RWPE1 (cell line): ENCODE measurements at regions of chr12 and their contacts with region 1.

Region 1: DNA sequence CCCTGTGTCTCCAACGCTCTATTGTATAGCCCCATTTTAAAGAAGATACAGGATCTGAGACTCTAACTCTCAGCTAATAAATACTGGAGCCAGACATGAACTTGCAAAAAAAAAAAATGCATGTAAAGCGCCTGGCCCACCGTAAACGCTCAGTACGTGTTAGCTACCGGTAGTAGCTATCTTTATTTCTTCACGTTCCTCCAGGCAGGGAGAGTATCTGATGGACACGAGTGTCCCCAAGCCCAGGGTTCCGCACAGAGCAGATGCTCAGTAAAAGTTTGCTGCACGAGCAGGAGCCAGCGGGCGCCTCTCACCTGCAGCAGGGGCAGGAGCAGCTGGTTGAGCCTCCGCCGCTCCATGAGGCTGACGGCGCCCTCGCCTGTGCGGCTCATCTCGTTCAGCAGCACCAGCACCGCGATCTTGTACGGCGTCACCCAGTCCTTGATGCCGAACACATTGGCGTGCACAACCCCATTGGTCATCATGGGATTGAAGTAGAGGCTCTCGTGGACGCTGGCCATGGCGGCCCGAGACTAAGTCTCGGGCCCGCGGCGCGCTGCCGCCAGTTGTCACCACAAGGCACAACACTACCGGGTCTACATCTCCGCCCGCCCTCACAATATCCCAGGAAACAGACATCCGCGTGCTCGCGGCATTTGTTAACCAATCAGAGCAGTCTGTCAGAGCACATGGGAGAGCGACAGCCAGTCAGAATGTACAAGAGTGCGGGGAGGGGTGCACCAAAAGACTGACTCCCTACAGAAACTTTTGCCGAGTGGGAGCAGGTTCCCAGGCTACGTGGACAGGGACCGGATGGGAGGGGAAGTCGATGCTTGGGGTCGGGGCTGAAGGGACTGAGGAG is at the start of gene ANAPC5:
- DNase-seq: peak; percentile 99
- H3K27ac ChIP-seq: peak within 1 kb of the TSS; percentile 86
- CTCF ChIP-seq: no peak

Region 2: DNA sequence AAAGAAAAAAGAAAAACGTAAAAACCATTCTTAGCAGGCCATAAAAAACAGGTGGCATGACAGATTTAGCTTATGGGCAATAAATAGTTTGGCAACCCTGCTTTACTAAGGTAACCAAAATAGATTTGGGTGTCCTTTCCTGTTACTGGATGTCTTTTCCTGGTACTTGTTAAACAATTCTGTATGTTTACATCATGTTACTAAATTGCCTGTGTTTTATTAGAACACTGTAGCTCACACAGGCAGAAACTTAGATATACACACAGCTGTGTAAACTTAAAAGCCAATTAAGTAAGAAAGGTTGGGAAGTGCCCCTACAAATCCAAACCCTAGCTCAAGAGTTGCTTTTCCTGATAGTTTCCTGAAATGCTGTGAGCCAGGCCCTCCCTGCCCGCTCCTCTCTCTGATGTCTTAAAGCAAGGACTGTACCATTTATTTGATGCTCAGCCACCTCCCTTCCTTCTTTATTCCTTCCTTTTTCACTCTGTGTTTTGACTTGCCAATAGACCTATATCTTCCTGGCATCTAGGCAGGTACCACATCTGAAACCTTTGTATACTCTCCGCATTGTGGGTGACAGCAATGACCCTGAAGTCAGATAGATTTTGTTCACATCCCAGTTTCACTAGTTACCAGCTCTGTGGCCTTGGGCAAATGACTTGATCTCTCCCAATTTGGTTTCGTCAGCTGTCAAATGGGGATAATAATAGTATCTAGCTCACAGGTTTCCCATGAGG is 51.8 kb before region 1 on chr12:
- CTCF ChIA-PET with region 1: interaction called, 10 read pairs
- POLR2A ChIA-PET with region 1: no interaction called
- DNase-seq: no peak
- H3K27ac ChIP-seq: no peak overlapping the region
- CTCF ChIP-seq: no peak

Region 3: GRCh38 chr12:121550974-121551634 is 199.1 kb after region 1 on chr12:
- CTCF ChIA-PET with region 1: no interaction called
- POLR2A ChIA-PET with region 1: no interaction called
- DNase-seq: no peak
- H3K27ac ChIP-seq: no peak overlapping the region
- CTCF ChIP-seq: no peak

Region 4: DNA sequence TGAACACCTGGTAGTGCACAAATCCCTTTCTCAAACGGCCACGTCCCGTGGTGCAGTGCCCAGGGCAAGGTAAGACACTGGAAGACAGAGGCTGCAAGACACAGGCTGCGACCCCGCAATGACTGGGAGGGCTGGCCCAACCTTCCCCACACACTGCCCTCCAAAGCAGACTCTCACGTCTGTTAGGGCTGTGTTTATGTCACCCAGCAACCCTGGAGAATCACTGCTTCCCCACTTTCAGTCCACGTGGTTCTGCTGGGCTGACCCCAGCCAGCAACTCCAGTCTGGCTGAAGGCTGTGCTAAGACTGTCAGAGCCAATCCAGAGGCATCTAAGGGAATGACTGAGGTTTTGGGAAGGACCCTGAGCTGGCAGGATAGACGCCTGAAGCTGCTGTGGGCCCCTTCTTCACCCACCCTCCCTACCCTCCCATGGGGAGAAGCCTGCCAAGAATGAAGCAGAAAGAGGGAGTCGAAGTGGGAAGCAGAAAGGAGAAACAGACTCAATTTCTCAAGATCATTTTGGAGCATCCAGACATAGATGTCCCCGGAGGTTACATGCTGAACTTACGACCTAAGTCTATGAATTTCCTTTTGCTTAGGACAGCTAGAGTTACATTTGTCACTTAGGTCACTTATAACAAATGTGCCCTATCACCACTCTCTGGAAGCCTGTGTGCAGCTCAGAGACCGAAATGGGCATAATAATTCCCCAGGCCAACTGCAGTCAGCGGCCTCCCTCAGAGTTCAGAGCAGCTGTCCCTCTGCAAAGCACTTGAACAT is 217.1 kb after region 1 on chr12:
- CTCF ChIA-PET with region 1: no interaction called
- POLR2A ChIA-PET with region 1: no interaction called
- DNase-seq: no peak
- H3K27ac ChIP-seq: no peak overlapping the region
- CTCF ChIP-seq: no peak